Activated naive CD4-positive, alpha-beta T cell treated with anti-CD3 and anti-CD28 coated beads for 36 hours (primary cell): ENCODE measurements at regions of chr6 and their contacts with region 1.

Region 1: GRCh38 chr6:73520688-73521350 is at the start of gene EEF1A1:
- DNase-seq: peak; percentile 100
- H3K4me3 Mint-ChIP-seq: peak within 1 kb of the TSS; percentile 93
- H3K27ac Mint-ChIP-seq: peak within 1 kb of the TSS; percentile 99
- H3K4me1 Mint-ChIP-seq: peaks cover 33% of the 10 kb centered on the region
- H3K27me3 Mint-ChIP-seq: peaks cover 4% of the 10 kb centered on the region
- total RNA-seq, gene EEF1A1: 18,342 to 18,732 TPM

Region 2: GRCh38 chr6:73152966-73153757 is 367.7 kb before region 1 on chr6:
- CTCF ChIA-PET with region 1: no interaction called
- intact Hi-C with region 1: no loop called
- DNase-seq: no peak
- H3K4me3 Mint-ChIP-seq: no peak overlapping the region
- H3K27ac Mint-ChIP-seq: no peak overlapping the region
- H3K4me1 Mint-ChIP-seq: no peaks in the 10 kb centered on the region
- H3K27me3 Mint-ChIP-seq: no peaks in the 10 kb centered on the region

Region 3: DNA sequence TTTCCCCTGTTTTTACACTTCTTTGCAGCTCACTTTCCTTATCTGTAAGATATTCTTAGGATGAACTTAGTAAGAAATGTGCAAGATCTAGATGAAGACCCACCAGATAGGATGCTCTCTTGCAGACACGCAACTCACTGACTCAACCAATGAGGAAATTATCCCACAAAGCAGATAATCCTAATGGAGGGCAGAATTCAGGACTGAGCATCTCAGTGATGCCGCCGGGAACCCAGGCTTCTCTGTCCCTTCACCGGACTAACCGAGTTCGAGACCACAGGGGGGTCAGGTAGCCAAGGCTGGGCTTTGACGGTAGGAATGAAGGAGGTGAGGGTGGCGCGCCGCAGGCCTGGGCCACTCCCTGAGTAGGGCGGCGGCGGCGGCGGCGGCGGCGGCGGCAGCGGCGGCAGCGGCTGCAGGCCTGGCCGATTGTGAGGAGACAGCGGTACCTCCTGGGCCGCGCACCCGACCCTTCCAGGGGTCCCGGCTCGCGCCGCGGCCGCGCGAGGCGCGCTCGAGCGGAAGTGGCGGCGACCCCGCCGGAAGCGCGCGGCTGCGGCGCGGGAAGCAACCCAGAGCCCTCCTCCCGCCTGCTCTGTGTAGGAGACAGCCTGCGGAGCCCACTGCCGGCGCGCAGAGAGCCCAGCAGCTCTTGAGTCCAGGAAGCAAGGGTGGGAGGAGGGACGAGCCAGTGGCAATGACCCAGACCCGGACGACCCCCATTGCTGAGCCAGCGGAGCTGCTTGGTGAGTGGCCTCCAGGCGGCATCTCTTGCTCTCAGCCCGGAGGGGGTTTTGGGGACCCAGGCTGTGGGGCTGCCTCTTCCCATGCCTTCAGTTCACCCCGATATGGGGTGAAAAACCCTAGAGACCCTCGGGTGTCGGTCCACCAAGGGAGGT is 257.9 kb before region 1 on chr6 and contains the start of gene KHDC1:
- CTCF ChIA-PET with region 1: no interaction called
- intact Hi-C with region 1: loop called (anchors 5 kb)
- DNase-seq: peak; percentile 65
- H3K4me3 Mint-ChIP-seq: peak within 1 kb of the TSS; percentile 80
- H3K27ac Mint-ChIP-seq: peak within 1 kb of the TSS; percentile 56
- H3K4me1 Mint-ChIP-seq: peaks cover 30% of the 10 kb centered on the region
- H3K27me3 Mint-ChIP-seq: no peaks in the 10 kb centered on the region
- total RNA-seq, gene KHDC1: 1.1 to 1.6 TPM

Region 4: DNA sequence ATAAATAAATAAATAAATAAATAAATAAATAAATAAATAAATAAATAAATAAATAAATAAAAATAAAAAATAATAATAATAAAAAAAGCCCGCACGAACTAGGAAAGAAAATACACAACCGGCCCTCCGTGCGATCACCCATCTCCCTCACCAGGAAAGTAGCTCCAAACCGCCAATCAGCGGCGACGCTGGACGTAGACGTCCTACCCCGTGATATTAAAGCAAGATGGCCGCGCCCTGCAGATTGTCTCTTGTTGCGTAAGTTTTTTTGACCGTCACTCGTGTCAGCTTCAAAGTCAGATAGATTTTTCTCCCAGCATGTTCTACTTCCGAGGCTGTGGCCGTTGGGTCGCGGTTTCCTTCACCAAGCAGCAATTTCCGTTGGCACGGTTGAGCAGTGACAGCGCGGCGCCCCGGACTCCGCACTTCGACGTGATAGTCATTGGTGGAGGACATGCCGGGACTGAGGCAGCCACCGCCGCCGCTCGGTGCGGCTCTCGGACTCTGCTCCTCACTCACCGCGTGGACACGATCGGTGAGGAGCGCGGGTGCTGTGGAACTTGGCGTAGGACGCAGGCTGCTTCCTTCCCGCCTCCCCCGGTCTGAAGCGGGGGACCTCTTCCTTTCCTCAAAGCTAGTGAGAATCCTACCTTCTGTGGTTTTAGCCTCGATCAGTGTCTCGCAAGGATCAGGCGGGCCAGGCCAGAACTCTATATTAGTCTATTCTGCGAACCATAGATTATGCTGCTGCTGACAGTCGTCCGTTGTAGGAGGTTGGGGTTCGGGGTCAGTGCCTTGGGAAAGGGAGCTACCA is 59.1 kb before region 1 on chr6 and contains the start of gene MTO1:
- CTCF ChIA-PET with region 1: interaction called, 3 read pairs
- intact Hi-C with region 1: loop called (anchors 1 kb)
- DNase-seq: peak; percentile 92
- H3K4me3 Mint-ChIP-seq: peak within 1 kb of the TSS; percentile 94
- H3K27ac Mint-ChIP-seq: peak within 1 kb of the TSS; percentile 97
- H3K4me1 Mint-ChIP-seq: peaks cover 37% of the 10 kb centered on the region
- H3K27me3 Mint-ChIP-seq: no peaks in the 10 kb centered on the region
- total RNA-seq, gene MTO1: 38.7 to 47.1 TPM

Region 5: GRCh38 chr6:73580247-73581149 is 59.7 kb after region 1 on chr6:
- CTCF ChIA-PET with region 1: interaction called, 10 read pairs
- intact Hi-C with region 1: loop called (anchors 1 kb)
- DNase-seq: peak; percentile 90
- H3K4me3 Mint-ChIP-seq: peak overlapping the region; percentile 76
- H3K27ac Mint-ChIP-seq: peak overlapping the region; percentile 99
- H3K4me1 Mint-ChIP-seq: peaks cover 28% of the 10 kb centered on the region
- H3K27me3 Mint-ChIP-seq: no peaks in the 10 kb centered on the region

Region 6: GRCh38 chr6:73610444-73611275 is 89.8 kb after region 1 on chr6:
- CTCF ChIA-PET with region 1: interaction called, 44 read pairs
- intact Hi-C with region 1: loop called (anchors 1 kb)
- DNase-seq: no peak
- H3K4me3 Mint-ChIP-seq: no peak overlapping the region
- H3K27ac Mint-ChIP-seq: peak overlapping the region; percentile 26
- H3K4me1 Mint-ChIP-seq: peaks cover 7% of the 10 kb centered on the region
- H3K27me3 Mint-ChIP-seq: no peaks in the 10 kb centered on the region

Region 7: DNA sequence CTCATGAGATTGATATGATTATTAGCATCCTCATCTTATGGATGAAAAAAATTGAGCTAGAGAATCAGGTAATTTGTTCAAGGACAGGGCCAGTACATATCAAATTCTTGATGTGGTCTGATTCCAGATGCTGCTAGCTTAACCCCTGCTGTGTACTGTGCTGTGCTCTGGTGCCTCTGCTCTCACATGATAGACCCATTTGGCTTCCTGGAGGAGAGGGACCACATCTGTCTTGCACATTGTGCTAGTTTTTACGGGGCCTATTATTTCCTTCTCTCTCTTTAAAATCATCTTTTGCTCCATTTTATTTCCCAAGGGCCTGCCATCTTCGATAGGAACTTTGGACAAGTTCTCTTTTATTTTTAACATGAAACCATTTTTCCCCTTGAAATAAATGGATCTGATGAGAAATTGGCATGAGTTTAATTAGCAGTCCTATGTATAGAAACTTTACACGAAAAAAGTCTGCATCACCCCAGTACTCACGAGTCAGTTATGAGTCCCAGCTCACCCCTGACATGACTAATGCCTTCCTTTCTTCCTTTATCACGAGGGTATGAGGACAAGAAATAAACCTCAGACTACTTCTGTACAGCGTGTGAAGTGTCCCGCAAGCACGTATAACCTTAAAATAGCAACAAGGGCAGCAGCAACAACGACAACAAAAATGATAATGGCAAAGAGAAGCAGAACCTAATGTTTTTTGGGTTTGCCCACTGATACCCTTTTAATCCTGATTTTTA is 201.7 kb after region 1 on chr6:
- CTCF ChIA-PET with region 1: no interaction called
- intact Hi-C with region 1: loop called (anchors 2 kb)
- DNase-seq: peak; percentile 55
- H3K4me3 Mint-ChIP-seq: no peak overlapping the region
- H3K27ac Mint-ChIP-seq: peak overlapping the region; percentile 15
- H3K4me1 Mint-ChIP-seq: peaks cover 27% of the 10 kb centered on the region
- H3K27me3 Mint-ChIP-seq: no peaks in the 10 kb centered on the region

Region 8: DNA sequence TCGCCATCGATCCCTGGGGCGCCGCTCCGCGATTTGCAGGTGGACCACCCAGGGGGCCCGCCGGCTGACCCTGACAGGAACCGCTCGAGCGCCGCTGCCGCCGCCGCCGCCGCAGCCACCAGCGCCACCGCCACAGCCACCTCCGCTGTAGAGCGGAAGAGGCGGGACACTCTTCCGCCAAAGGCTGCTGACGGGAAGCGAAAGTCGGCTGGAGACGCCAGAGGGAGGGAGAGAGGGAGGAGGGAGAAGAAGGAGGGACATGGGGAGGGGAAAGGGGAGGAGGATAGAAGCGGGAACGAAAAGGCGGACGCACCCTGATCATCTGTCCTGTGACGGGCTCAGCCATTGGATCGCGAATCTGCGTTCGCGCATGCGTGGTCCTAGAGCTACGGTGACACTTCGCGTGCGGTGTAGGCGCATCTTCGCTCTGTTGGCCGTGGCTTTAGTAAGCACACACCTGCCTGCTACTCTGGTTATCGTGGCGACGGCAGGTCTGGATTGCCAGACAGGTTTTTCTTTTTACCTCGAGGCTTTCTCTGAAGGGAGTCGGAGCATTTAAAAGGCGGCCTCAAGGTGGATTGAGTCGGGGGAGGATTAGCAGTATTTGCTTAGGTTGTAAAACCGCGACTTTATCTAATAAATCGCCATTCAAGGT is 1763.9 kb after region 1 on chr6 and contains the start of gene TMEM30A:
- CTCF ChIA-PET with region 1: no interaction called
- intact Hi-C with region 1: loop called (anchors 2 kb)
- DNase-seq: peak; percentile 97
- H3K4me3 Mint-ChIP-seq: no peak within 1 kb of the TSS
- H3K27ac Mint-ChIP-seq: no peak within 1 kb of the TSS
- H3K4me1 Mint-ChIP-seq: peaks cover 44% of the 10 kb centered on the region
- H3K27me3 Mint-ChIP-seq: no peaks in the 10 kb centered on the region
- total RNA-seq, gene TMEM30A: 68.9 to 76.0 TPM